Left lung (tissue), 14 donors: ENCODE measurements at regions of chr14 and their contacts with region 1.

Region 1: GRCh38 chr14:103696466-103697071 is 18.7 kb downstream of the XRCC3 start:
- DNase-seq: peak; percentile 32 to 75 (median 62)
- ATAC-seq: no peak
- H3K4me3 ChIP-seq: no peak overlapping the region
- H3K27ac ChIP-seq: peak overlapping the region; percentile 14 to 33
- H3K4me1 ChIP-seq: peaks cover 2 to 42% of the 10 kb centered on the region in 2 donors
- H3K27me3 ChIP-seq: no peaks in the 10 kb centered on the region
- CTCF ChIP-seq: no peak

Region 2: DNA sequence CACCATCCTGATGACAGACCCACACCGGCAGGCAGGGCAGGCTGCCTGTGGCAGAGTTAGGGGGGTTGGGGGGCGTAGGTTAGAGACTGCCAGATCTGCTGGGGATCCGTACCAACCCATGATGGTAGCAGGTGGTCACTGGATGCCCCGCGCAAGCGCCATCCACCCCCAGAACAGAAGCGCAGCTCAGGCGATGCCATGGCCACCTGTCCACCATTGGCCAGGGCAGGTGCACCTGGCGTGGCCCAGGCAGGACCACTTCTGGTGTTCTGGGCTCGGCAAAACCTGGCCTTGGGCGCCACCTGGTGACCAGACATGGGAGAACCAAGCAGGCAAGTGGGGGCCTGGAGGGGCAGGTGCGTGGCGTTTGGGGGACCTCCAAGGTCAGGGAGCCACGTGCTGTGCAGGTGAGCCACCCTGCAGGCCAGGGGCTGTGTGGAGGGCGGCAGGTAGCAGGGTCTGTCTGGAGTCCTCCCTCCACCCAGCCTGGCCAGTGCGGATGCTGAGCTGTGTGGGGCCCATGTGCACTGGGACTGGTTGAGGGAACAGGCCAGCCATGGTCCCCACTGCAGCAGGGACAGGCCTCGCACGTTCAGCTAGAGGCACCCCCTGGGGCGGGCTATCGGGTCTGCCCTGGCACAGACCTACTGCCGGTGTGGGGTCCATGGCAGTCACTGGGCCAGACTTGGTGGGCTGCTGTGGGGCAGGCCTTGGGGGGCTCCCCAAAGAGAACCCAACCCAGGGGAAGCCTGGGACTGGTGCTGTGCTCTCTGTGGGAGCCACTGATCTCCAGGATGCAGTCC is 149.7 kb before region 1 on chr14:
- intact Hi-C with region 1: no loop called
- DNase-seq: peak in 3 of 4 donors; percentile 68 to 92 (median 74)
- ATAC-seq: peak; percentile 63
- H3K4me3 ChIP-seq: no peak overlapping the region
- H3K27ac ChIP-seq: no peak overlapping the region
- H3K4me1 ChIP-seq: peaks cover 18 to 26% of the 10 kb centered on the region in 2 donors
- H3K27me3 ChIP-seq: peaks cover 0 to 10% of the 10 kb centered on the region in 2 donors
- CTCF ChIP-seq: peak; percentile 86 to 88

Region 3: GRCh38 chr14:103576371-103577024 is 120.1 kb before region 1 on chr14:
- intact Hi-C with region 1: loop called in 1 of 2 experiments (anchors 10 kb)
- DNase-seq: peak; percentile 73 to 93 (median 91)
- ATAC-seq: peak; percentile 98
- H3K4me3 ChIP-seq: no peak overlapping the region
- H3K27ac ChIP-seq: peak overlapping the region; percentile 78 to 89
- H3K4me1 ChIP-seq: peaks cover 6 to 45% of the 10 kb centered on the region in 2 donors
- H3K27me3 ChIP-seq: no peaks in the 10 kb centered on the region
- CTCF ChIP-seq: no peak

Region 4: DNA sequence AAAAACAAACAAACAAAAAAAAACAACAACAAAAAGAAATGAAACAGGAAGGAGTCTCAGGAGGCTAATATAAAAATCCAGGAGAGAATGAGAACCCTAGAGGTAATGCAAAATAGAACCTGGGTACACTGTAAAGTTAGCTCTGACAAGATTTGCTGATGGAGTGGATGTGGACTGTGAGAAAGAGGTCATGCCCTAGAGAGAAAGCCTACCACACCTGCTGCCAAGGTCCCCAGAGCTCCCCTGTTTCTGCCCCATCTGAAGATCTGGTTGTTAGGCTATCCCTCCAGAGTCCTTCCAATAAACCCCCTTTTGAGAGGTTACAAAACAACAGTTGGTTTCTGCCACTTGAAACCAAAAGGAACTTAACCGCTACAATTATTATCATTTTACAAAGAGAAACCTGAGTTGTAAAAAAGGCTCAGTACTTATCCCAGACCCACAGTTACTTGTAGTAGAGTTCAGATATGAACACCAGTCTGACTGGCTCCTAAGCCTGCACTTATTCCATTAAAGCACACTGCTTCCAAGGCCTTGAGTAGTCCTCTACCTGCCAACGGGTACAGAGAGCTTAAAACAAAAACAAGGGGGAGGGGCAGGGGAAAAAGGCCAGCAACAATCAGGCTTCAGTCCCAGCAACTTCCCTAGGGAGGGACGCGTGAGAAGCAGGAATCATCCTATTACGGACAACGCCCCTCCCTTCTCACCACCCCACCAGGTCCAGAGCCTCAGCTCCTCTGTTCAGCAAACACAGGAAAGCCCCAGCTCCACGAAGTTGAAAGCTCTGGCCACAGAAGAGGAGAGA is 123.1 kb after region 1 on chr14:
- intact Hi-C with region 1: no loop called
- DNase-seq: peak in 3 of 4 donors; percentile 30 to 73 (median 55)
- ATAC-seq: peak; percentile 95
- H3K4me3 ChIP-seq: no peak overlapping the region
- H3K27ac ChIP-seq: peak overlapping the region in 1 of 2 donors; percentile 41
- H3K4me1 ChIP-seq: peaks cover 6 to 12% of the 10 kb centered on the region in 2 donors
- H3K27me3 ChIP-seq: peaks cover 0 to 15% of the 10 kb centered on the region in 2 donors
- CTCF ChIP-seq: no peak

Region 5: DNA sequence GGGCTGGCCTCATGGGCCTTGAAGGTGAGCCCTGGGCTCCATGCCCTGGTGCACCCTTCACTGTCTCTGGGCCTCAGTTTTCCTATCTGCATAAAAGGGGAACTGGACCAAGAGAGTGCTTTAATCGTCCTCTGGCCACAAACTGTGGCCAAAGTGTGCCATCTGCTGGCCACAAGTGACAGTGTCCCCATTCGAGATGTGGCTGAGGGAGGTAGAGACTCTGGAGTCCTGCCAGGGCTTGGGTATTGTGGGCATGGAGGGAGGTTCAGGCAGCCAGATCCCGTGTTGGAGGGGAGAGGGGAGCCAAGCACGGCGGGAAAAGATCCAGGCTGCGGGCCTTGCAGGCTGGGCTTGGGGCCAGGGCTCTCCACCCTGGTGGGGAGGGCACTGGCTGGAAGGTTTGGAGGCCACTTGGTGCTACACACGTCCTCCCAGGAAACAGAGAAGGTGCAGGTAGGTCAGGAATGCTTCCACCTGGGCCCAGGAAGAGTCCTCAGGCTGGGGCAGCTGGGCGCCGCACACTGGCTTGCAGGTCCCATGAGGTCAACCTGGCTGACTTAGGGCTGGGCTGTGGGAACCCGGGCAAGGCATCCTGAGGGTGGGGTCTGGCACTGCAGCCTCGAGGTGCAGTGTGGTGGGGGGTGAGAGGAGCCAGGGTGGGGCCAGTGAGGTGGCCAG is 434.5 kb after region 1 on chr14:
- intact Hi-C with region 1: no loop called
- DNase-seq: peak in 3 of 4 donors; percentile 42 to 65 (median 51)
- ATAC-seq: peak; percentile 89
- H3K4me3 ChIP-seq: no peak overlapping the region
- H3K27ac ChIP-seq: no peak overlapping the region
- H3K4me1 ChIP-seq: peaks cover 0 to 5% of the 10 kb centered on the region in 2 donors
- H3K27me3 ChIP-seq: peaks cover 19 to 52% of the 10 kb centered on the region in 2 donors
- CTCF ChIP-seq: peak; percentile 61 to 62